ENCODE measurements at regions of chr11 and their contacts with region 1.

Region 1: DNA sequence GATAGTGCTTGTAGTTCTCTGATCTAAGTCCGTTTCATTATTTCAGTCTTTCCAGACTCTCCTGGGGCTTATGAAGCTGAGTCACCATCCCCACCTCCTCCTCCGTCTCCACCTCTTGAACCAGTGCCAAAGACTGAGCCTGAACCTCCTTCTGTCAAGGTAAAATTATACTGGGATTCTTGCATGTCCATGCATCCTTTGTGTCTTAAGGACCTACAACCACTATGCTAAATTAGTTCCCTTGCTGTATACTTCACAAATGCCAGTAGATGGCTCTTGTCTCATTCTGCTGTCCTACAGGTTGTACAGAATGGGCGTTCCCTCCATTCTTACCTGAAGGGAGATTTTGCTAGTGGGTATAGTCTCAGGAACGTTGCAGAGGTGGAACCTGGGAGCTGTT is 42.2 kb downstream of the POLD3 start:
- DNase-seq: peak; percentile 39
- H3K4me3 ChIP-seq: no peak overlapping the region
- H3K27ac ChIP-seq: no peak overlapping the region
- H3K4me1 ChIP-seq: no peaks in the 10 kb centered on the region
- H3K27me3 ChIP-seq: no peaks in the 10 kb centered on the region
- CTCF ChIP-seq: no peak

Region 2: GRCh38 chr11:74354036-74354435 is 280.5 kb before region 1 on chr11:
- intact Hi-C with region 1: no loop called
- DNase-seq: no peak
- H3K4me3 ChIP-seq: no peak overlapping the region
- H3K27ac ChIP-seq: no peak overlapping the region
- H3K4me1 ChIP-seq: no peaks in the 10 kb centered on the region
- H3K27me3 ChIP-seq: no peaks in the 10 kb centered on the region
- CTCF ChIP-seq: no peak

Region 3: GRCh38 chr11:74543991-74544390 is 90.5 kb before region 1 on chr11:
- intact Hi-C with region 1: no loop called
- DNase-seq: no peak
- H3K4me3 ChIP-seq: no peak overlapping the region
- H3K27ac ChIP-seq: no peak overlapping the region
- H3K4me1 ChIP-seq: no peaks in the 10 kb centered on the region
- H3K27me3 ChIP-seq: no peaks in the 10 kb centered on the region
- CTCF ChIP-seq: no peak

Region 4: GRCh38 chr11:74726547-74727182 is 92.1 kb after region 1 on chr11:
- intact Hi-C with region 1: loop called (anchors 10 kb)
- DNase-seq: peak; percentile 69
- H3K4me3 ChIP-seq: no peak overlapping the region
- H3K27ac ChIP-seq: no peak overlapping the region
- H3K4me1 ChIP-seq: no peaks in the 10 kb centered on the region
- H3K27me3 ChIP-seq: peaks cover 18% of the 10 kb centered on the region
- CTCF ChIP-seq: peak; percentile 85